ENCODE measurements at regions of chr12 and their contacts with region 1.

Region 1: DNA sequence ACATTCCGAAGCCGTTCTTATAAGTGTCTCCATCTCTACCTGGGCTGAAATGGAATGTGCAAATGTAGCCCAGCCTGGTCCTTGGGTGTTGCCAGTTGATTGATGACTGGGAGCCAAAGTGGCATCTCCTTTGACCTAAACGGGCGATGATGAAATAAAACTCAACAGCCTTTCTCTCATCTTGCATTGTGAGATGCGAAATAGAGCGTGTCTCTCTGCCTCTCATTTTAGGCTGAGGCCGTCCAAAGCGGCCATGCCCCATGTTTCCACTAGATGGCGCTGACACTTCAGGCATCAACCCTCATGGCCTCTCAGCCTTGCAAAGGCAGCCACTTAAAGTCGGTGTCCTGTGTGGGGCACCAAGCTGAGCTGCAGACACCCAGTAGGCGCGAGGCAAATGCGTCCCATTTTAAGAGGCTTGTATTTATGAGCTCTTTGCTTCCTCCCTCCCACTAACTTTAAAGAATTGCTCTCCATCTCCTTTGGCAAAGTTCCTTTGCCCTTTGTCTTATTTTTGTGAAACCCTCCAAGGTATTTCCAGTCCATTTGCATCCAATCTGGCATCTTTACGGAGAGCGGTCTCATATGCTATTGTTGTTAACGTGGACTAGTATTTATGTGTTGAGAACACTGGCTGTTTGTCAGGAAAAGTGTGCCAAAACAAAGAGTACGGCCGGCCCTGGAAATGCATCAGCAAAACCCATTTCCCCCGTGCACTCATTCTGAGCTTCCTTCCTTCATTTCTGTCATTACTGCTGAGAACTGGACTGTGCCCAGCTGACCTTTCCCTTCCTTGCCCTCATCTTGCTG is 25.0 kb downstream of the GPRC5A start:
- DNase-seq: peak; percentile 89 to 94
- ATAC-seq: peak; percentile 96
- H3K4me3 ChIP-seq: no peak overlapping the region
- H3K27ac ChIP-seq: peak overlapping the region; percentile 10 to 15
- H3K4me1 ChIP-seq: no peaks in the 10 kb centered on the region
- H3K27me3 ChIP-seq: no peaks in the 10 kb centered on the region

Region 2: DNA sequence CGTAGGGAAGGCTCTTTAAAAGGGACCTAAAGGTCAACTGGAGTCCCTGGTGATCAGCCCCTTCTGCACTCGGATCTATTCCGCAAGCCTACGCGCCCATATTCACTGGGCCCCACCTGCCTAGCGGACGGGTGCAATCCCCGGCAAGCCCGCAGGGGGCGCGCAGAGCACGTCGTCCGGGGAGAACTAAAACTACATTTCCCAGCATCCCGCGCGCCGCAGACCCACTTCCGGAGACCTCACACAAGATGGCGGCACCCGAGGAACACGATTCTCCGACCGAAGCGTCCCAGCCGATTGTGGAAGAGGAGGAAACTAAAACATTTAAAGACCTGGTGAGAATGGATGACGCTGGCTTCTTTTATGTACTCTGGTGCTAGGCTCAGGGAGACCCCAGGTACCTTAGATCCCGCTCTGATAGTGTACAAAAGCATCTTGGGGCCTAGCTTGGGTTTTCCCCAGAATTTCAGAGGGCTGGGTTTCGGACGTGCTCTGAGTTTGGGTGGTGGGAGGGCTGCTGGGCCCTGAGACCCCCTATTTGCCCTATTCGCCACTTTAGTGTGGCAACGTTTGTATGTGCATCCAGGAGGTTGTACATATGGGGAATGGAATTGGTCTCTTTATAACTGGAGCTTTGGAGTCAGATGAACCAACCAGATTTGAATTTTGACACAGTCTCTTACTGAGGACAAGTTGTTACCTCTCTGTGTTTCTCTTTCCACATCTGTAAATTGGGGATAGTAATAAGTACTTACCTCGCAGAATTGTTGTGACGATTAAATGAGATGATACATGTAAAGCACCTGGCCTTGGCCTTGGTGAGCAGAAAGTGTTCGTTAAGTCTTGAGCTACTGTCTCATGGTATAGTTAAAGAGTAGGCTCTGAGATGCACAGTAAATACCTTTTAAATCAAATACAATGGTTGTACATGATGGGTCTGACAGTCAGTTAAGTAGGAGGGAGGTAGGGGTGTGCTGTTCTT is 102.9 kb before region 1 on chr12 and contains the start of gene DDX47:
- intact Hi-C with region 1: no loop called
- DNase-seq: peak; percentile 97 to 99
- ATAC-seq: peak; percentile 98
- H3K4me3 ChIP-seq: peak within 1 kb of the TSS; percentile 81 to 91
- H3K27ac ChIP-seq: peak within 1 kb of the TSS in 1 of 2 donors; percentile 11
- H3K4me1 ChIP-seq: peaks cover 0 to 10% of the 10 kb centered on the region in 2 donors
- H3K27me3 ChIP-seq: no peaks in the 10 kb centered on the region
- total RNA-seq, gene DDX47: 42.8 to 46.0 TPM

Region 3: GRCh38 chr12:12975322-12976077 is 59.2 kb after region 1 on chr12:
- intact Hi-C with region 1: loop called (anchors 5 kb)
- DNase-seq: no peak
- ATAC-seq: peak; percentile 72
- H3K4me3 ChIP-seq: no peak overlapping the region
- H3K27ac ChIP-seq: peak overlapping the region; percentile 90 to 96
- H3K4me1 ChIP-seq: peaks cover 0 to 5% of the 10 kb centered on the region in 2 donors
- H3K27me3 ChIP-seq: no peaks in the 10 kb centered on the region

Region 4: DNA sequence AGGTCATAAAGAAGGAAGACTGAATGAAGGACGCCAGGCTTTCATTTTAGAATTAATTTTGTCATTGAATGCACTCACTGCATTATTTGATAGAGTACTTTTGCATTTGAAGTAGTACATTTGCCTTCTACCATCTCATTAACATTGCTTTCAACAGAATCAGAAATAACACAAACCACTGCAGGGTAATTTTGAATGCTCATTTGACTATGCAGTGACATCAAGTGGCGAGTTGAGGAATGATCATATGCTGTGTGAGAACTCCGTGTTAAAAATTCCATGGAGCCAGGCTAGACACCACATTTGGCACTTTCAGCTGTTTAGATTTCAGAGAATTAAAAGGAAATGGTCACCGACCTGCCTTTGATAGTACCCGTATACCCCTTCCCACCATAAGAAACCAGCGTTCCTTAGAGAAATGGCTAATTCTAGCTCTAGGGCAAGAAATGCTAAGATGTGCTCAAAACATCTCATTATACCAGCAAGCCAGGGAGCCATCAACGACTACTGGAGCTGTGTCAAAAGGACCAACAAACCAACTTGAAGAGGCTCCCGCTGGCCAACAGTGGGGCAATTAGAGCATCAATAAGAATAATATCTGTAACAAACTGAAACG is 67.2 kb after region 1 on chr12:
- intact Hi-C with region 1: loop called (anchors 5 kb)
- DNase-seq: no peak
- ATAC-seq: peak; percentile 79
- H3K4me3 ChIP-seq: no peak overlapping the region
- H3K27ac ChIP-seq: no peak overlapping the region
- H3K4me1 ChIP-seq: peaks cover 0 to 5% of the 10 kb centered on the region in 2 donors
- H3K27me3 ChIP-seq: no peaks in the 10 kb centered on the region

Region 5: GRCh38 chr12:13094347-13094746 is 178.0 kb after region 1 on chr12:
- intact Hi-C with region 1: loop called (anchors 10 kb)
- DNase-seq: no peak
- ATAC-seq: no peak
- H3K4me3 ChIP-seq: no peak overlapping the region
- H3K27ac ChIP-seq: no peak overlapping the region
- H3K4me1 ChIP-seq: peaks cover 0 to 7% of the 10 kb centered on the region in 2 donors
- H3K27me3 ChIP-seq: no peaks in the 10 kb centered on the region

Measured in aorta (tissue), 5 donors.